Keratinocyte (primary cell): ENCODE measurements at regions of chr7 and their contacts with region 1.

Region 1: DNA sequence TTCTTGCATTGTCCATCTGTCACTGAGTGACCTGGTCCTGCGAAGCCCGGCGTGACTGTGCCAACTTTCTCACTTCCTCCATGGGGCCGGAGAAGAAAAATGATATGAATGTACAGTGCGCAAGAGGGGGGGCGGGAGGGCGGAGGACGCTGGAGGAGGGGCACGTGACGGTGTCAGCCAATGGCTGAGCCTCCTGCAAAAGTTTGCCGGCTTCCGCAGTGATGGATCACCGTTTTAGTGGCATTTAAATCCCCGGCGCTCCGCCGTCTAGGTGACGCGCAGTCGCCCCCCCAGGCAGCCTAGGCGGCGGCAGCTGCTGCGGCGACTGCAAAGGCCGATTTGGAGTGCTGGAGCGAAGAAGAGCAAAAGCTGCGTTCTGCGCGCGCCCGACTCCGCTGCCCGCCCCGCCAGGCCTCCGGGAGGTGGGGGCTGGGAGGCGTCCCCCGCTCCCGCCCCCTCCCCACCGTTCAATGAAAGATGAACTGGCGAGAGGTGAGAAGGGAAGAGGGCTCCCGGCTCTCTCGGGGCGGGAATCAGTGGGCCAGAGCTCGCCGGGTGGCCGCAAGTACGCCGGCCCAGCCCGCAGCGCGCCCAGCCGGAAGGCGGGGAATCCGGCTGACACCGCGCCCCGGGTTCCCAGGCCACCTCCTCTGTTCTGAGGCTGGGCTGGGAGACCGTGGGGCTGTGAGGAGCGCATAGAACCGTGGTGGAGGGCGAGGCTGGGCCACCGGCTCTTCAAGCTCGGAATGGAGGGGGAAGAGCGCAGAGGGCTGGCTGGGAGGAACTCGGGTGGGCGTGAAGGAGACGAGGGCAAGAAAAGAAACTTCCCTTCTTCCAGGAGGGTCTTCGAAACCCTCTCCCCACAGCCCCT is at the start of gene HOXA1:
- DNase-seq: peak; percentile 78
- H3K4me3 ChIP-seq: peak within 1 kb of the TSS; percentile 83 to 96 (median 89)
- H3K27ac ChIP-seq: peak within 1 kb of the TSS; percentile 97
- H3K4me1 ChIP-seq: peaks cover 29% of the 10 kb centered on the region
- H3K27me3 ChIP-seq: no peaks in the 10 kb centered on the region
- CTCF ChIP-seq: peak in 1 of 3 experiments; percentile 46
- polyA plus RNA-seq, gene HOXA1: 5.2 to 12.5 TPM (median 11.9 TPM) in 3 replicates

Region 2: GRCh38 chr7:26864309-26865093 is 231.6 kb before region 1 on chr7 and contains the start of gene SKAP2:
- dilution Hi-C with region 1: loop called (anchors 25 kb)
- DNase-seq: peak; percentile 94
- H3K4me3 ChIP-seq: peak within 1 kb of the TSS; percentile 54 to 82 (median 78)
- H3K27ac ChIP-seq: peak within 1 kb of the TSS; percentile 90
- H3K4me1 ChIP-seq: peaks cover 34% of the 10 kb centered on the region
- H3K27me3 ChIP-seq: no peaks in the 10 kb centered on the region
- CTCF ChIP-seq: no peak
- polyA plus RNA-seq, gene SKAP2: 8.6 to 15.0 TPM (median 11.1 TPM) in 3 replicates

Region 3: DNA sequence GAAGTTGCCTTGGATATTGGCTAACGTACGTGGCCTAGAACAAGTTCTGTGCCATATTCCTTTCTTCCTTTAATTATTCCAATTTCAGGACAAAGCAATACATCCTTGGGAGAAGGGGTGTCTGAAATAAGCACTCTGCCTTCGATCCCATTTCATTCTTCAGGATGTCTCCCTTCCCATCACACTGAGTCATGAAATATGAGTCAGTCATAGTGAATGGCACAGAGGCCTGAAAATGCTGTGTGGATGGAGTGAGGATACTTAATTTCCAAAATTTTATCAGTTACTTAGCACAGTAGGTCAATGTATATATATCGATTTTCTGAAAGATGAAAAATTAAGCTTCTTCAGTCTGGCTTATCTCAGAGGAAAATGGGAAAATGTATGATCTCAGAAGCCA is 166.0 kb after region 1 on chr7:
- dilution Hi-C with region 1: no loop called
- DNase-seq: no peak
- H3K4me3 ChIP-seq: no peak overlapping the region
- H3K27ac ChIP-seq: no peak overlapping the region
- H3K4me1 ChIP-seq: peaks cover 3% of the 10 kb centered on the region
- H3K27me3 ChIP-seq: peaks cover 15% of the 10 kb centered on the region
- CTCF ChIP-seq: no peak

Region 4: GRCh38 chr7:27364344-27365100 is 268.4 kb after region 1 on chr7:
- dilution Hi-C with region 1: no loop called
- DNase-seq: no peak
- H3K4me3 ChIP-seq: no peak overlapping the region
- H3K27ac ChIP-seq: no peak overlapping the region
- H3K4me1 ChIP-seq: no peaks in the 10 kb centered on the region
- H3K27me3 ChIP-seq: peaks cover 6% of the 10 kb centered on the region
- CTCF ChIP-seq: no peak